ENCODE measurements at regions of chr1 and their contacts with region 1.

Region 1: DNA sequence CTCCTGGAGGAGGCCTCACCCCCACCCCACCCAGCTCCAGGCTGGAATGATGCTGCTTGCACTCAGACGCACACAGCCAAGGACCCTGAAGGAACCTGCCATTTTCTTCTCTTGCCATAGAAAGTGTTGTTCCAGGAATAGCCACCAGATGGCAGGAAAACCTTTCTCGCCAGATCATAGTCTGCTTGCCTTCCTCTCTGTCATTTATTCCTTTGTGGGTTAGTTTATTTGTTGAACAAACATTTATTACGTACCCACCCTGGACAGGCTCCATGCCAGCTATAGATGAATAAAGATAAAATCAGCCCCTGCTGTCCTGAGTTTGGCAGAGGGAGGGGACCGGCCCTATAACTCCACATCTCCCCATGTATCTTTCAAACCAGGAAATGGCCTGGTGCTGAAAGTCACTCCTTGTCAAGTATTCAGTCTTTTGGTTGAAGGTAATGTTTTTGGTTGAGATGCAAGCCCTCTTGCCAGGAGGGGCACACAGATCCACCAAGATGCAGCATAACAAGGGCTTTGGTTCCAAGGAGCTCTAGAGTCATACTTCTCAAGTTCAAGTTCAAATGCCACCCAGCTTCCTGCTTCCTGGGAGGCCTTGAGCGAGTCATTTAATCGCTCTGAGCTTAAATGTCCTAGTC is 7.0 kb upstream of the KCNC4 start:
- DNase-seq: peak; percentile 48
- H3K4me3 ChIP-seq: no peak overlapping the region
- H3K27ac ChIP-seq: no peak overlapping the region
- H3K4me1 ChIP-seq: no peaks in the 10 kb centered on the region
- H3K27me3 ChIP-seq: no peaks in the 10 kb centered on the region
- CTCF ChIP-seq: peak; percentile 84 to 96

Region 2: DNA sequence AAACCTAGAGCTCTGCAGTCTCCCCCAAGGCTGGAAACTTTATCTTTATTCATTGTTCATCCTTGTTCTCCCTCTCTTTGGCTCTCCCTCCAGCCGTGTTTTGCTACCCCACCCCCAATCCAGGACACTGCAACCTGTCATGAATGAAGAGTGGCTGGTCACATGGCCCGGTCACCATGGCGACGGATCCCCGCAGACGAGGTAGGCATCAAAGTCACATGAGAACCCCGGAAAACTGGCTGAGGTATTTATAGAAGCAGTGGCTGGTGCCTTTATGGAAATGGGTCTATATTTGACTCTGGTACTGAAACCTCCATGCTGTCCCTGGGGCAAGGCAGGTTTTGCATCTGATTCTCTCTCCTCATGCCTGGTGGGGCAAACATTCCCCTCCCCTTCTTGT is 66.2 kb before region 1 on chr1:
- CTCF ChIA-PET with region 1: no interaction called
- dilution Hi-C with region 1: no loop called
- in situ Hi-C with region 1: no loop called
- intact Hi-C with region 1: no loop called
- DNase-seq: no peak
- H3K4me3 ChIP-seq: no peak overlapping the region
- H3K27ac ChIP-seq: no peak overlapping the region
- H3K4me1 ChIP-seq: no peaks in the 10 kb centered on the region
- H3K27me3 ChIP-seq: peaks cover 7% of the 10 kb centered on the region
- CTCF ChIP-seq: no peak

Region 3: GRCh38 chr1:110254996-110255787 is 52.1 kb after region 1 on chr1:
- CTCF ChIA-PET with region 1: no interaction called
- dilution Hi-C with region 1: loop called (anchors 5 kb)
- in situ Hi-C with region 1: no loop called
- intact Hi-C with region 1: no loop called
- DNase-seq: no peak
- H3K4me3 ChIP-seq: no peak overlapping the region
- H3K27ac ChIP-seq: no peak overlapping the region
- H3K4me1 ChIP-seq: peaks cover 15% of the 10 kb centered on the region
- H3K27me3 ChIP-seq: no peaks in the 10 kb centered on the region
- CTCF ChIP-seq: no peak

Region 4: GRCh38 chr1:110292031-110292741 is 89.0 kb after region 1 on chr1:
- CTCF ChIA-PET with region 1: interaction called, 3 read pairs
- dilution Hi-C with region 1: loop called (anchors 5 kb)
- in situ Hi-C with region 1: no loop called
- intact Hi-C with region 1: no loop called
- DNase-seq: peak; percentile 39
- H3K4me3 ChIP-seq: no peak overlapping the region
- H3K27ac ChIP-seq: no peak overlapping the region
- H3K4me1 ChIP-seq: peaks cover 9% of the 10 kb centered on the region
- H3K27me3 ChIP-seq: no peaks in the 10 kb centered on the region
- CTCF ChIP-seq: no peak

Region 5: GRCh38 chr1:110312188-110313121 is 109.3 kb after region 1 on chr1:
- CTCF ChIA-PET with region 1: interaction called, 29 read pairs
- dilution Hi-C with region 1: loop called (anchors 5 kb)
- in situ Hi-C with region 1: loop called (anchors 5 kb)
- intact Hi-C with region 1: loop called (anchors 1 kb)
- DNase-seq: peak; percentile 49
- H3K4me3 ChIP-seq: no peak overlapping the region
- H3K27ac ChIP-seq: no peak overlapping the region
- H3K4me1 ChIP-seq: peaks cover 20% of the 10 kb centered on the region
- H3K27me3 ChIP-seq: no peaks in the 10 kb centered on the region
- CTCF ChIP-seq: peak; percentile 97 to 99

Region 6: GRCh38 chr1:110412576-110412975 is 209.4 kb after region 1 on chr1:
- CTCF ChIA-PET with region 1: no interaction called
- dilution Hi-C with region 1: no loop called
- in situ Hi-C with region 1: loop called in 1 of 2 experiments (anchors 10 kb)
- intact Hi-C with region 1: loop called (anchors 1 kb)
- DNase-seq: peak; percentile 58
- H3K4me3 ChIP-seq: no peak overlapping the region
- H3K27ac ChIP-seq: no peak overlapping the region
- H3K4me1 ChIP-seq: no peaks in the 10 kb centered on the region
- H3K27me3 ChIP-seq: no peaks in the 10 kb centered on the region
- CTCF ChIP-seq: peak; percentile 63 to 89

Region 7: GRCh38 chr1:110449661-110450651 is 246.8 kb after region 1 on chr1:
- CTCF ChIA-PET with region 1: no interaction called
- dilution Hi-C with region 1: no loop called
- in situ Hi-C with region 1: loop called in 1 of 2 experiments (anchors 5 kb)
- intact Hi-C with region 1: no loop called
- DNase-seq: no peak
- H3K4me3 ChIP-seq: no peak overlapping the region
- H3K27ac ChIP-seq: no peak overlapping the region
- H3K4me1 ChIP-seq: no peaks in the 10 kb centered on the region
- H3K27me3 ChIP-seq: peaks cover 6% of the 10 kb centered on the region
- CTCF ChIP-seq: no peak

Region 8: GRCh38 chr1:110460253-110461220 is 257.4 kb after region 1 on chr1:
- CTCF ChIA-PET with region 1: interaction called, 11 read pairs
- dilution Hi-C with region 1: no loop called
- in situ Hi-C with region 1: loop called in 1 of 2 experiments (anchors 5 kb)
- intact Hi-C with region 1: loop called (anchors 1 kb)
- DNase-seq: peak; percentile 62
- H3K4me3 ChIP-seq: no peak overlapping the region
- H3K27ac ChIP-seq: no peak overlapping the region
- H3K4me1 ChIP-seq: peaks cover 22% of the 10 kb centered on the region
- H3K27me3 ChIP-seq: no peaks in the 10 kb centered on the region
- CTCF ChIP-seq: peak; percentile 98 to 99

Region 9: GRCh38 chr1:110594456-110595352 is 391.6 kb after region 1 on chr1:
- CTCF ChIA-PET with region 1: no interaction called
- dilution Hi-C with region 1: no loop called
- in situ Hi-C with region 1: no loop called
- intact Hi-C with region 1: no loop called
- DNase-seq: no peak
- H3K4me3 ChIP-seq: no peak overlapping the region
- H3K27ac ChIP-seq: no peak overlapping the region
- H3K4me1 ChIP-seq: no peaks in the 10 kb centered on the region
- H3K27me3 ChIP-seq: peaks cover 7% of the 10 kb centered on the region
- CTCF ChIP-seq: no peak

Measured in mammary epithelial cell (primary cell).